GM18951 (cell line): ENCODE measurements at regions of chr20 and their contacts with region 1.

Region 1: GRCh38 chr20:50929299-50930138 is 1.7 kb downstream of the ADNP start:
- POLR2A ChIP-seq: peak; percentile 34

Region 2: GRCh38 chr20:50815162-50815989 is 114.1 kb before region 1 on chr20:
- in situ Hi-C with region 1: loop called (anchors 10 kb)
- POLR2A ChIP-seq: peak; percentile 34